HAP-1 (cell line): ENCODE measurements at regions of chr11 and their contacts with region 1.

Region 1: DNA sequence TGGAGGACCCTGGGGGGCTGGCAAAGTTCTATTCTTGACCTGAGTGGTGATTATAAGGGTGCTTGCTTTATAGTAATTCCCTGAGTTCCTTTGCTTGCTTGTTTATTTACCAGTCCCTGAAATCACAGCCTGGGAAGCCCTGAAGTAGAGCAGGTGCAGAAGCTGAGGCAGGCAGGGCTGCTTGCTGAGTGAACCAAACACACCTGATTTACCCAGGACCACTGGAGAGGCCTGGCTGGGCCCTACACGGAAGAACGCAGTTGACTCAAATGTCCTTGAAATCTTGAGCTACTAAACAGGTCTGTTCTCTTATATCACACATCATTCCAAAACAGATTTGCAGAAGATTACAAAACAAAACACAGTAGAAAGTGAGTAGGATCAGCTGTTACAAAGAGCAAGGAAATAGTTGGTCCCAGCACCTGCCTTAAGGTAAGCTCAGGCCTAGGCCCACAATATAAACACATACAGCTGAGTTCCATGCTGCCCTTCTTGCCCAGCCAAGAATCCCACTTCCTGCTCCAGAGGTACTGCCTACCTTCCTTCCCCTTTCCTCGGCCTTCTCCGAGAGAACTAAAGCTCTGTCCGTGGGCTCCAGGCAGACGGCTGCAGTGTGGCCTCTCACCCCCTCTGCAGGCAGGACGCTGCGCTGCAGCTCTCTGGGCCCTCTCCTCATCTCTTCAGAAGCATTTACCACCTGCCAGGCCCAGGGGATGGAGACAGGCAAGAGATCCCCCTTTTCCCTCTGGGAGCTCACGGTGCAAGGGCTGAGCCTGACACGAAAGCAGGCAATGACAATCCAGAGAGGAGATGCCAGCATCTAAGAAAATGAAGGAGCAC is 46.1 kb upstream of the SCUBE2 start:
- DNase-seq: peak; percentile 65 to 86
- H3K4me3 ChIP-seq: no peak overlapping the region
- H3K4me1 ChIP-seq: no peaks in the 10 kb centered on the region
- H3K27me3 ChIP-seq: no peaks in the 10 kb centered on the region

Region 2: GRCh38 chr11:9015677-9016076 is 121.8 kb before region 1 on chr11:
- in situ Hi-C with region 1: loop called (anchors 5 kb)
- DNase-seq: peak; percentile 75 to 79
- H3K4me3 ChIP-seq: no peak overlapping the region
- H3K4me1 ChIP-seq: 0 out of 2 replicates have a peak, but pooled peaks cover 3% of the 10 kb centered on the region
- H3K27me3 ChIP-seq: no peaks in the 10 kb centered on the region